PC-9 (cell line): ENCODE measurements at regions of chr16 and their contacts with region 1.

Region 1: GRCh38 chr16:558298-559020 is 1.7 kb upstream of the PRR35 start:
- DNase-seq: peak in 1 of 2 experiments; percentile 43
- H3K4me3 ChIP-seq: no peak overlapping the region
- H3K27ac ChIP-seq: no peak overlapping the region
- H3K4me1 ChIP-seq: 0 out of 2 replicates have a peak, but pooled peaks cover 3% of the 10 kb centered on the region
- H3K27me3 ChIP-seq: no peaks in the 10 kb centered on the region
- CTCF ChIP-seq: no peak

Region 2: GRCh38 chr16:425082-425718 is 133.3 kb before region 1 on chr16 and contains the start of gene RAB11FIP3:
- CTCF ChIA-PET with region 1: no interaction called
- POLR2A ChIA-PET with region 1: interaction called, 14 read pairs
- intact Hi-C with region 1: no loop called
- DNase-seq: peak; percentile 57 to 81
- H3K4me3 ChIP-seq: peak within 1 kb of the TSS; percentile 68
- H3K27ac ChIP-seq: no peak within 1 kb of the TSS
- H3K4me1 ChIP-seq: peaks cover 22% of the 10 kb centered on the region
- H3K27me3 ChIP-seq: no peaks in the 10 kb centered on the region
- CTCF ChIP-seq: no peak; the same call in 1 of the 2 replicates
- total RNA-seq, gene RAB11FIP3: 38.4 and 42.4 TPM in 2 replicates